Activated CD8-positive, alpha-beta T cell treated with anti-CD3 and anti-CD28 coated beads for 36 hours (primary cell): ENCODE measurements at regions of chr9 and their contacts with region 1.

Region 1: DNA sequence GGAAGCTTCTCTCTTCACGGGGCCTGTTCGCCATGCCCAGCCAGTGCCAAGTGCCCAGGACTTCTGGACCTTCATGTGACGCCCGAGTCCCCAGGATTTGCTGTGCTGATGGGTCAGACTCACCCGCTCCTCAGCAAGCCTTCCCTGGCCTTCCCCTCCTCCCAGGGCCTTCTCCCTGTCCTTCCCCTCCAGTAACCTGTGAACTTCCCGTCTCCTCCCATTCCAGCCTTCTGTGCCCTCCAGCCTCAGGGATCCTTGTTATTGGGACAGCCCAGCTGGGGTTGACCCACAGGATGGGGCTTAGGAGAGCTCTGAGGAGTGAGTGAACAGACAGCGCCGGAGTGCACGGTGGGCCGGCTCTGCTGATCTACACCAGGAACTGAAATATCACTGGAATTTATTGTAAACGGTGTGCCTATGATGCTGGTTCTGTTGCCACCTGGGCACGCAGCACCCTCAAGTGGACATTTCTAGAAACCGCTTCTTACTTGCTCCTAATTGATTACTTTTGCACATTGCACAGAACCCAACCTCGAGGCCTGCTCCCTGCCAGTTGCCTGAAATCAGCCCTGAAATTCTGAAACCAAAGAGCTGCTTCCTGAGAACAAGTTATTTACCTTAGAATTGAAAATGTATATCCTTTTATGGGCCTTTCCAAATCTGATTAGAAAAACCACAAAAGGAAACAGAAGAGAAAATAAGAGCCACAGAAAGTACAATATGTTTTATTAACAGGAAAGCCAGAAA is 1.5 kb downstream of the SPAAR start:
- DNase-seq: peak; percentile 68
- ATAC-seq: peak; percentile 75
- H3K4me3 Mint-ChIP-seq: no peak overlapping the region
- H3K27ac Mint-ChIP-seq: peak overlapping the region; percentile 85
- H3K4me1 Mint-ChIP-seq: peaks cover 47% of the 10 kb centered on the region
- H3K27me3 Mint-ChIP-seq: no peaks in the 10 kb centered on the region
- CTCF ChIP-seq: peak; percentile 38

Region 2: DNA sequence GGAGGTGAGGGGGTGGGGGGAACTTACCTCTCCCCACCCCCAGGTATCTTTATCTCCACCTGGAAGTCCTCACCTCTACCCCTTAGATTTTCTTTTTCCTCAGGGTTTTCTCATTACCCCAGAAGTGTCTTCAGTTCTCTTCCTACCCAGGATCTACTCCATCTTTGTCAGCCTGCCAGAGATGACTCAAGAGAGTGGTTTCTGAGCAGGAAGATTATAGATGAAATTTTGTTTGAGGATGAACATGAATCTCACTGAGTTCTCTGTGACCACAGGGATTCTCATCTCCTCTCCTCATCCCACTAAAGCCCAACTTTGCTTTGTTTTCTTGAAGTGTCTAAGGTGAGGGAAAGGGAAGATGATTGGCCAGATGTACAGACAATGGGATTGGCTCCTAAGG is 90.7 kb before region 1 on chr9:
- CTCF ChIA-PET with region 1: no interaction called
- POLR2A ChIA-PET with region 1: no interaction called
- intact Hi-C with region 1: no loop called
- DNase-seq: no peak
- ATAC-seq: no peak
- H3K4me3 Mint-ChIP-seq: no peak overlapping the region
- H3K27ac Mint-ChIP-seq: no peak overlapping the region
- H3K4me1 Mint-ChIP-seq: peaks cover 4% of the 10 kb centered on the region
- H3K27me3 Mint-ChIP-seq: no peaks in the 10 kb centered on the region
- CTCF ChIP-seq: no peak

Region 3: GRCh38 chr9:35954942-35955546 is 44.3 kb after region 1 on chr9:
- CTCF ChIA-PET with region 1: interaction called, 11 read pairs
- POLR2A ChIA-PET with region 1: no interaction called
- intact Hi-C with region 1: no loop called
- DNase-seq: peak; percentile 67
- ATAC-seq: peak; percentile 80
- H3K4me3 Mint-ChIP-seq: no peak overlapping the region
- H3K27ac Mint-ChIP-seq: no peak overlapping the region
- H3K4me1 Mint-ChIP-seq: no peaks in the 10 kb centered on the region
- H3K27me3 Mint-ChIP-seq: peaks cover 4% of the 10 kb centered on the region
- CTCF ChIP-seq: peak; percentile 79

Region 4: GRCh38 chr9:36250079-36250478 is 339.3 kb after region 1 on chr9:
- CTCF ChIA-PET with region 1: no interaction called
- POLR2A ChIA-PET with region 1: no interaction called
- intact Hi-C with region 1: no loop called
- DNase-seq: no peak
- ATAC-seq: no peak
- H3K4me3 Mint-ChIP-seq: no peak overlapping the region
- H3K27ac Mint-ChIP-seq: peak overlapping the region; percentile 13
- H3K4me1 Mint-ChIP-seq: peaks cover 19% of the 10 kb centered on the region
- H3K27me3 Mint-ChIP-seq: no peaks in the 10 kb centered on the region
- CTCF ChIP-seq: no peak